Right lobe of liver (tissue), 6 donors: ENCODE measurements at regions of chr20 and their contacts with region 1.

Region 1: GRCh38 chr20:19784511-19785172 is 26.6 kb downstream of the RIN2 start:
- DNase-seq: peak in 1 of 3 donors; percentile 54
- ATAC-seq: peak; percentile 92 to 97 (median 94)
- H3K4me3 ChIP-seq: no peak overlapping the region
- H3K27ac ChIP-seq: no peak overlapping the region
- H3K4me1 ChIP-seq: peaks cover 0 to 13% (median 0%) of the 10 kb centered on the region in 4 donors
- H3K27me3 ChIP-seq: no peaks in the 10 kb centered on the region
- CTCF ChIP-seq: peak; percentile 68 to 83 (median 73)
- POLR2A ChIP-seq: no peak

Region 2: DNA sequence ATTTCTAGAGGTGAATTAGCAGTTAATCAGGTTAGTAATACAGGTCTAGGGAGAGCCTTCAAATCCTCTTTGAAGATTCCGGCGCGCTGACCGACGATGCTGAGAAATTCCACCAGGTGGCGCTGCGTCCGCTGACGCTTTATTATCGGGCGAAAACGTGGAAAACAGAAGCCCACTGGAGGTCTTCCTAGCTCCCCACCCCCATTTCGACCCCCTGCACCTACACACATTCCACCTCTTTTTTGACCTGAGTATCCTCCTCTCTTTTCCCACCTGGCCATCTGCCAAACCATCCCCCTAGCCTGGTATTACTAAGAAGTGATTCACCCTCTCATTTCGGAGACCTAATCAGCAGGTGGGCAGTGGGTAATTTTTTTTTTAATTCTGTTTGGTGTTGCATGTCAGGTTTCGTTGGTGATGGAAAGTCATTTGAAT is 91.9 kb before region 1 on chr20:
- intact Hi-C with region 1: loop called in 1 of 2 experiments (anchors 10 kb)
- DNase-seq: peak in 2 of 3 donors; percentile 47 to 58
- ATAC-seq: peak; percentile 47 to 74 (median 72)
- H3K4me3 ChIP-seq: no peak overlapping the region
- H3K27ac ChIP-seq: no peak overlapping the region
- H3K4me1 ChIP-seq: no peaks in the 10 kb centered on the region
- H3K27me3 ChIP-seq: no peaks in the 10 kb centered on the region
- CTCF ChIP-seq: peak; percentile 64 to 97 (median 91)
- POLR2A ChIP-seq: no peak

Region 3: DNA sequence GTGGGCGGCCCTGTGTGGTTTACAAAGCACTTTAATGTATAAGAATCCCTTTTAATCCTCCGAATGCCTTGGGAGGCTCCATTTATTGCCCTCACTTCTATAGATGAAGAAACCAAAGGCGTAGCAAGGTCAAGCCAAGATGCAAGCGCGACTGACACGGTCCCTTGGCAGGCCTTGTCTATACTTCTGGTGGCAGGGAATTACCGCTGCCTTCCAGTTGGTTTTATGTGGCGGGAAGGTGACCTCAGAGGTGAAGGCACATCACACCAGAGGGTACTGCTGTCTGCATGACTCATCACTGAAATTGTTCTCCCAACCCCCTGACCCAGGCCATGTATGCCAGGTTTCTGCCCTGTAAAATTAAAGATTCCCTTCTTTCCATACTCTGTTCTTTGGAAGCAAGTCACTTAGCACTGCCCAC is 196.4 kb after region 1 on chr20:
- intact Hi-C with region 1: loop called in 1 of 2 experiments (anchors 10 kb)
- DNase-seq: no peak
- ATAC-seq: peak in 1 of 4 donors; percentile 36
- H3K4me3 ChIP-seq: no peak overlapping the region
- H3K27ac ChIP-seq: no peak overlapping the region
- H3K4me1 ChIP-seq: peaks cover 0 to 4% (median 0%) of the 10 kb centered on the region in 4 donors
- H3K27me3 ChIP-seq: no peaks in the 10 kb centered on the region
- CTCF ChIP-seq: no peak
- POLR2A ChIP-seq: no peak

Region 4: GRCh38 chr20:19995220-19995863 is 210.7 kb after region 1 on chr20:
- intact Hi-C with region 1: loop called in 1 of 2 experiments (anchors 10 kb)
- DNase-seq: no peak
- ATAC-seq: peak; percentile 58 to 71 (median 67)
- H3K4me3 ChIP-seq: no peak overlapping the region
- H3K27ac ChIP-seq: no peak overlapping the region
- H3K4me1 ChIP-seq: peaks cover 0 to 35% (median 4%) of the 10 kb centered on the region in 4 donors
- H3K27me3 ChIP-seq: no peaks in the 10 kb centered on the region
- CTCF ChIP-seq: peak; percentile 74 to 87 (median 81)
- POLR2A ChIP-seq: no peak